Transverse colon (tissue), 4 donors: ENCODE measurements at regions of chr13 and their contacts with region 1.

Region 1: DNA sequence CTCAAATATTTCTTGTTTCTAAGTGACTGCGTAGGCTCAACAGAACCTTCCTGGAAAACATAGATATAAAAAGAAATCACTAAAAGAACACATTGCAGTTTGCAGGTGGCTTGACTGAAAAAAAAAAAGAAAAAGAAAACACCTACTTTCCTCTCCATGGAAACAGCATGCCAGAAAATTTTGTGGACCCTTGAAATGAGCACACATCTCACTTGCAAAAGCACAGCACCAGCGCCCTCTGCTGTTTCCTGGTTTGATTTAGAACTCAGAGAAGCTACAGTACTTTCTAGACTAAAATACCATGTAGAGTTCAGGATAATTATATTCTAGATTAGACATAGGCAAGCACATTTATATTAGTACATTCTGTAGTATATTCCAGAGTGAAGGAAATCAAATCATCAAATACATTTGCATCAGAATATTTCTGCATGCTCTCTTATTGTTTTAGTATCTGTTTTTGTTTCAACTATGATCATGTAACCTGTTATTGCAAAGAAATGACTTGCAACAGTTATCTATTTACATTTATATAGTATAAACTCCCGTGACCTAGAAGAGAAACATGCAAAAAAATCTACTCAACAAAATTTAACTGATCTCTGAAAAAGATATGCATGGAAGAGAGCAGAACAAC is 22.3 kb upstream of the XPO4 start:
- DNase-seq: peak; percentile 79
- H3K4me3 ChIP-seq: no peak overlapping the region
- H3K27ac ChIP-seq: no peak overlapping the region
- H3K4me1 ChIP-seq: no peaks in the 10 kb centered on the region
- H3K27me3 ChIP-seq: no peaks in the 10 kb centered on the region
- CTCF ChIP-seq: peak; percentile 48 to 72 (median 72)
- EP300 ChIP-seq: no peak
- POLR2A ChIP-seq: no peak

Region 2: GRCh38 chr13:19737844-19738557 is 1186.9 kb before region 1 on chr13:
- in situ Hi-C with region 1: no loop called
- intact Hi-C with region 1: no loop called
- DNase-seq: no peak
- H3K4me3 ChIP-seq: no peak overlapping the region
- H3K27ac ChIP-seq: no peak overlapping the region
- H3K4me1 ChIP-seq: no peaks in the 10 kb centered on the region
- H3K27me3 ChIP-seq: no peaks in the 10 kb centered on the region
- CTCF ChIP-seq: no peak
- EP300 ChIP-seq: no peak
- POLR2A ChIP-seq: no peak

Region 3: GRCh38 chr13:20182231-20182846 is 742.5 kb before region 1 on chr13:
- in situ Hi-C with region 1: loop called in 3 of 4 experiments (anchors 10 to 25 kb)
- intact Hi-C with region 1: no loop called
- DNase-seq: no peak
- H3K4me3 ChIP-seq: no peak overlapping the region
- H3K27ac ChIP-seq: no peak overlapping the region
- H3K4me1 ChIP-seq: no peaks in the 10 kb centered on the region
- H3K27me3 ChIP-seq: peaks cover 33% of the 10 kb centered on the region
- CTCF ChIP-seq: peak; percentile 65 to 79 (median 79)
- EP300 ChIP-seq: no peak
- POLR2A ChIP-seq: no peak

Region 4: DNA sequence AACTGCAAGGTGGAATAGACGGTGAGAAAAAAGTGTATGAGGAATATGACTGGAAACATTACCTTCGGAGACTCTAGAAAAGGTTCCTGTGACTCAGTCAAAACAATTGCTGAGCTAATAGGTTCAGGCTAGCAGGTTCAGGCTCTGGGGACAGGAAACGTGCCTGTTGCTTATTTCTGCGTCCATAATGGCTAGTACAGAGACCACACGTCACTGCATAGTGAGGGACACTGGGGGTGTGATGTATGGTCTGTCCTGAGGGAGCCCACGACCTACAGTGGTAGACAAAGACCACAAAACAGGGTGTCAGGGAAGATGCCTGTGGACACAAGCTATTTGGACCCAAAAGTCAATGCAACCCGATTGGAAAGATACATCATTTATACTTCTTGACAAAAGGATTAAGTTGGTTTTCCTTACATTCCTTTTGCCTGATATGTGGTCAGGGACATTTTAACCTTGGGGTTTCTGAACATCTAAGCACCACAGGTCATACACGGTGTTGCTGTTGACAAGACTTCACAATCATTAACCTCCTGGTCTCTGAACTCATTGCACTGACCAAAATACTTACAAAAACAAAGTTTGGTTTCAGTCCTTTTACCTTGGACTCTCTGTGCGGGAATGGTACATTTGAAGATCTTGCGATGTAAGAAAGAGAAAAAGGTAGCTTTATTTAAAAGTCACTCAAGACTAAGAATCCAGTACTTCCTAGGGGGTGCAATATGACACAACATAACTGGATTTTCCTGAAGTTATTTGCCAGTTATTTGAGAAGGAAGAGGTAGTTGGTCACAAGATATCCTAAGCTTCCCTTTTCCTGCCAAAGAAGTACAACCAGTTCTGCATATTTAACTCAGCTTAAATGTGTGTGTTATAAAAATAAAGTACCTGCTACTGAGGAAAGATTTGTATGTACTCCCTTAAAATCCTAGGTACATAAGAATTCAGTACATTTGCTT is 419.2 kb before region 1 on chr13:
- in situ Hi-C with region 1: loop called in 1 of 4 experiments (anchors 10 kb)
- intact Hi-C with region 1: no loop called
- DNase-seq: no peak
- H3K4me3 ChIP-seq: no peak overlapping the region
- H3K27ac ChIP-seq: no peak overlapping the region
- H3K4me1 ChIP-seq: no peaks in the 10 kb centered on the region
- H3K27me3 ChIP-seq: no peaks in the 10 kb centered on the region
- CTCF ChIP-seq: no peak
- EP300 ChIP-seq: no peak
- POLR2A ChIP-seq: no peak

Region 5: DNA sequence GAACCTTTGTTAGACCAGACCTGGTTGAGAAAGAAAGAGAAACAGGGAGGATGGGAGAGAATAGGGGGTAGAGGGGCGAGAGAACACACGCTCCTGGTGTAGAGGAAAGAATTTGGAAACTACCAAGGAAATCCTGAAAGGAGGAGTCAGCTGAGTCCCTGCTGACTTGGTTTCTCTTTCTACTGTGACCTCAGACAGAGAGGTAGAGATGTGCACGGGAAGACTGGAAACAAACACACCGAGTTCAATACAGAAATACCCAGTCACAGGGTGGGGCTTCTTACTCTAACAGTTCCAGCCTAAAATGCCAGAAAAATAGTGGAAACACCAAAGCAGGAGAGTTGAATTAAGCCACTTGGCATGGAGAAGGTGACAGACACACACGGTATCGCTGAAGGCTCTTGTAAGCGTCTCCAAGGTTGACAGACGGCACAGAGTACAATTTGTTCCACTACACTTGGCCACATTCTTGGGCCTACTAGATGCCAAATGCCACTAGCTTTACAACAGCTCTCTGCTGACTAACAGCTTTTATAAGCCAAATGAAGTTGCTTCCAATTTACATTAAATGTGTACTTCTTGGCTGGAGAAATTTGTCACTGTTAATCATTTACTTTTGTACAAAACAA is 108.5 kb after region 1 on chr13:
- in situ Hi-C with region 1: no loop called
- intact Hi-C with region 1: no loop called
- DNase-seq: peak; percentile 35
- H3K4me3 ChIP-seq: no peak overlapping the region
- H3K27ac ChIP-seq: peak overlapping the region; percentile 73 to 83 (median 77)
- H3K4me1 ChIP-seq: peaks cover 10 to 48% (median 26%) of the 10 kb centered on the region in 4 donors
- H3K27me3 ChIP-seq: no peaks in the 10 kb centered on the region
- CTCF ChIP-seq: no peak
- EP300 ChIP-seq: peak; percentile 92
- POLR2A ChIP-seq: no peak

Region 6: DNA sequence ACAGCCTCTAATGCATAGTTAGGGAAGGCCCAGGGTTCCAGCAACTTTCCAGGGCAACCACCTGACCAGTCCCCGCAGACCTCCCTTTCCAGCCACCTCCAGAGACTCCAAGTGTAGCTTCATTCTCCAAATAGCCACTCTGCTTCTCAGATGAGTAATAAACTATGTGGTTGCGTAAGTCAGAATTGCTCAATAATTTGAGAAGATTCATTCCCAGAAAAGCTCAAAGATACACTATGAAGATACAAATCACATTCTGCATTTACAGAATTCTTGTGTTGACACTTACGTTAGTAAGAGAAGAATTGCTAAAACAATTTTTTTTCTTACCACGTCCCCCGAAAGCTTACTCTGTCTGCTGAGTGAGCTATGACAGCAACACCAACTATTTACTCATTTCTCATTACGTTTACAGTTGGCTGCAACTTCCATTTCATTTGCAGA is 144.7 kb after region 1 on chr13:
- in situ Hi-C with region 1: no loop called
- intact Hi-C with region 1: no loop called
- DNase-seq: no peak
- H3K4me3 ChIP-seq: no peak overlapping the region
- H3K27ac ChIP-seq: peak overlapping the region; percentile 46 to 77 (median 66)
- H3K4me1 ChIP-seq: peaks cover 0 to 2% (median under 1%) of the 10 kb centered on the region in 4 donors
- H3K27me3 ChIP-seq: peaks cover 5% of the 10 kb centered on the region
- CTCF ChIP-seq: no peak
- EP300 ChIP-seq: peak; percentile 60
- POLR2A ChIP-seq: no peak

Region 7: DNA sequence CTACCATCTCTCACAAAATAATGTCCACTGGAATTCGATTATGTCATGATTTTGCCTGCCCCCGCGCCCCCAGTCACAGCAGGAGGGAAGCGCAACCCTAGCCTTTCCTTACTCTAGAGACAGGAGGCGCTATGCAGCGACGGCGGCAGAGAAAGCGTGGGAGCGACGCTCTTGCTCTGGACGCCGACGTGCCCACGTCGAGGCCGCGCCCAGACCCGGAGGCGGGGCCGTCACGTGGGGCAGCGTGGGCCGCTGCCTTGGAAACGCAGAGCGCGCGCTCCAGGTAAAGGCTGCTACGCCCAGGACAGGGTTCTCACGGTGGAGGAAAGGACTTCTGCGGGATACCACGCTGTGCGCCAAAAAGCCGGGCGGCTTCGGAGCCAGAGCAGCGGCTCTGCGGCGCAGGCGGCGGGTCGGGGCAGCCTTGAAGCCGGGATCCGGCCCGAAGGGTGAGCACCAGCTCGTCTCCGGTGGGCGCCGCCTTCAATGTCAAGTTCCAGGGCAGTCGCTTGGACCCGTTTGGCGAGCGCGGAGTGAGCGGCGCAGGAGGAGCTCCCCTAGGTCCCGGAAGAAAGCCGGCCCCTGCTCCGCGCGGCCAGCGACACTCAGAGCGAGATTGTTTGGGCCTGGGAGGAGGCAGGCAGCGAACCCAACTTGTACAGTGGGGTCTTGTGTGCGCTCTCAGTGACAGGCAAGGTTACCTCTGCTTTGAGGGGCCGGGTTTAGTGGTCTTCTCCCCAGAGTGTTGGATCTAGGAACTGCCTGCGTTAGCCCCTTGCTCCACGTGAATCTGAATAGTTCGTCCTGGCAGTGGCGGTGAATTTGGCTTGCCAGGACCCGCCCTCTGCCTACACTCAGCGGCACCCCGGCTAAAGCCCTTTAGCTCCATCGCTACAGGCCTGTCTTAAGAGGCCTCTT is 373.3 kb after region 1 on chr13:
- in situ Hi-C with region 1: loop called in 1 of 4 experiments (anchors 25 kb)
- intact Hi-C with region 1: no loop called
- DNase-seq: peak; percentile 90
- H3K4me3 ChIP-seq: peak overlapping the region; percentile 64 to 92 (median 74)
- H3K27ac ChIP-seq: peak overlapping the region; percentile 75 to 88 (median 86)
- H3K4me1 ChIP-seq: peaks cover 7 to 24% (median 13%) of the 10 kb centered on the region in 4 donors
- H3K27me3 ChIP-seq: no peaks in the 10 kb centered on the region
- CTCF ChIP-seq: peak; percentile 82 to 95 (median 87)
- EP300 ChIP-seq: no peak
- POLR2A ChIP-seq: peak; percentile 35